Activated CD8-positive, alpha-beta T cell treated with anti-CD3 and anti-CD28 coated beads for 36 hours (primary cell): ENCODE measurements at regions of chr14 and their contacts with region 1.

Region 1: DNA sequence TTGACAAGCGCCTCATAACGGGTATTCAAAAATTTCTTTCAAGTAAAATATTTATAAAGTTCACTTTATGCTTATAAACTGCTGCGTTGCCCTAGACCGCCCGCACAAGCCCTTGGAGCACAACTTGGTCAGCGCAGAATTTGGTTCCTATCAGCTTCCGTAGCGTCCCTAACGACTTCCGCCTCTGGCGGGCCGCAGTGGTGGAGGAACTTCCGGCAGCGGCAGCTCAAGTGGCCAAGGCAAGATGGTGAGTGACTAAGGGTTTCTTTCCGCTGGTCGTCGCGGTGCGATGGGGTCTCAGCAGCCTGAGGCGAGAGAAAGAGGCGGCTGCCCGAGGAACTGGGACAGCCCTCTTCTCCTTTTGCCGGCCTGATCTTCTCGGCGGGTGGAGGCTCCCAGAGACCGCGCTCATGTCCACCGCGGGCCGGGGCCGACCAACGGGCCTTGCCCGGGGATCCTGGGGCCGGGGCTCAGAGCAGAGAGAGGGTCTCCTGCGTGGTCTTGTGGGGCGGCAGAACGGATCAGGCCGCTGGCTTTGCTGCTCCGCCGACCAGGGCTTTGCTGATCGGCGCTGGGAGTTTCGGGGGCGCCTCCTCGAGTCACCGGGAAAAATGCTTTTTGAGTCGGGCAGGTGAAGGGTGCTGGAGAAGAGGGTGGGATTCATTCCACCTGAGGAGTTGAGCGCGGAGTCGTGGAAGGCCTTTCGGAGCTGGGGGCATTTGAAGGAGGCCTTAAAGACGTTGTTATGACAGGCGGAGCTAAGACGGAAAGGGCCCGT is at the start of gene PSMC1:
- DNase-seq: peak; percentile 94
- ATAC-seq: peak; percentile 96
- H3K4me3 Mint-ChIP-seq: peak within 1 kb of the TSS; percentile 85
- H3K27ac Mint-ChIP-seq: peak within 1 kb of the TSS; percentile 97
- H3K4me1 Mint-ChIP-seq: peaks cover 25% of the 10 kb centered on the region
- H3K27me3 Mint-ChIP-seq: peaks cover 2% of the 10 kb centered on the region
- CTCF ChIP-seq: no peak
- total RNA-seq, gene PSMC1: 101 to 105 TPM

Region 2: GRCh38 chr14:90177539-90178189 is 78.9 kb before region 1 on chr14:
- CTCF ChIA-PET with region 1: no interaction called
- POLR2A ChIA-PET with region 1: no interaction called
- intact Hi-C with region 1: no loop called
- DNase-seq: no peak
- ATAC-seq: no peak
- H3K4me3 Mint-ChIP-seq: no peak overlapping the region
- H3K27ac Mint-ChIP-seq: no peak overlapping the region
- H3K4me1 Mint-ChIP-seq: no peaks in the 10 kb centered on the region
- H3K27me3 Mint-ChIP-seq: peaks cover 10% of the 10 kb centered on the region
- CTCF ChIP-seq: no peak

Region 3: GRCh38 chr14:90235179-90235976 is 21.2 kb before region 1 on chr14:
- CTCF ChIA-PET with region 1: interaction called, 10 read pairs
- POLR2A ChIA-PET with region 1: interaction called, 4 read pairs
- intact Hi-C with region 1: no loop called
- DNase-seq: peak; percentile 75
- ATAC-seq: peak; percentile 87
- H3K4me3 Mint-ChIP-seq: no peak overlapping the region
- H3K27ac Mint-ChIP-seq: no peak overlapping the region
- H3K4me1 Mint-ChIP-seq: no peaks in the 10 kb centered on the region
- H3K27me3 Mint-ChIP-seq: peaks cover 10% of the 10 kb centered on the region
- CTCF ChIP-seq: peak; percentile 99

Region 4: GRCh38 chr14:90266441-90267154 is 10.1 kb after region 1 on chr14:
- CTCF ChIA-PET with region 1: no interaction called
- POLR2A ChIA-PET with region 1: interaction called, 18 read pairs
- intact Hi-C with region 1: no loop called
- DNase-seq: no peak
- ATAC-seq: no peak
- H3K4me3 Mint-ChIP-seq: no peak overlapping the region
- H3K27ac Mint-ChIP-seq: no peak overlapping the region
- H3K4me1 Mint-ChIP-seq: peaks cover 7% of the 10 kb centered on the region
- H3K27me3 Mint-ChIP-seq: no peaks in the 10 kb centered on the region
- CTCF ChIP-seq: no peak

Region 5: GRCh38 chr14:90276646-90277367 is 20.3 kb after region 1 on chr14:
- CTCF ChIA-PET with region 1: no interaction called
- POLR2A ChIA-PET with region 1: no interaction called
- intact Hi-C with region 1: no loop called
- DNase-seq: peak; percentile 15
- ATAC-seq: no peak
- H3K4me3 Mint-ChIP-seq: no peak overlapping the region
- H3K27ac Mint-ChIP-seq: peak overlapping the region; percentile 42
- H3K4me1 Mint-ChIP-seq: peaks cover 13% of the 10 kb centered on the region
- H3K27me3 Mint-ChIP-seq: no peaks in the 10 kb centered on the region
- CTCF ChIP-seq: no peak

Region 6: DNA sequence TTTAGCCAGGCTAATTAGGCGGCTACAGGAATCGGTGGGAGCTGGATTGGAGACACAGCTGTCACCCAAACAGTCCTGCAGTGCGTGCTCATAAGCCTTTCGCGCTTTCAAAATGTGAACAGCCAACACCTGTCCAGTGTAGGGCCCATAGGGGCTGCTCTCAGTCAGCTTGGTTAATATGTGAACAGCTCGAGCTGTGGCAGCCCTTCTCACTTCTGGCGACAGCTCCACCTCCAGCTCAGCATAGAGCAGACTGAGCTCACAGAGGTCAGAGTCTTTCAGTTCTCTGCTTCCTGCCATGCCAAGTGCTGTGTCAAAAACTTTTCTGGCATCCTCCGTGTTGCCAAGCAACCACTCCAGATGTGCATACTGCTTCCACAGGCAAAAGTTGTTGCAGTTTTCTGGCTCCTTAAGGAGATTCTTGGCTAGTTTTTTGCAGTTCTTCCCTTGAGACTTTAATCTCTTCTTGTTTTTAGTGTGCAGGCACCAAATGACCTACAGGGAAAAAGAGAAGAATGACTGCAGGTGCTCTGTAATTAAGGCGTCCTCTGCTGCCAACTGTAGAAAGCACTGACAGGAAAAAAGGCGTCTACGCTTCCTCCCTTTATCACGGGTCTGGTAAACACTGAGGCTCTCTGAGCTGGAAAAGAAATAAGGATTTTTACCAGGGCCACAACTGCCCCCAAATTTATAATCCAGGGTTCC is 32.3 kb after region 1 on chr14:
- CTCF ChIA-PET with region 1: no interaction called
- POLR2A ChIA-PET with region 1: no interaction called
- intact Hi-C with region 1: no loop called
- DNase-seq: no peak
- ATAC-seq: no peak
- H3K4me3 Mint-ChIP-seq: no peak overlapping the region
- H3K27ac Mint-ChIP-seq: no peak overlapping the region
- H3K4me1 Mint-ChIP-seq: no peaks in the 10 kb centered on the region
- H3K27me3 Mint-ChIP-seq: no peaks in the 10 kb centered on the region
- CTCF ChIP-seq: no peak